Natural killer cell (primary cell): ENCODE measurements at regions of chrX and their contacts with region 1.

Region 1: DNA sequence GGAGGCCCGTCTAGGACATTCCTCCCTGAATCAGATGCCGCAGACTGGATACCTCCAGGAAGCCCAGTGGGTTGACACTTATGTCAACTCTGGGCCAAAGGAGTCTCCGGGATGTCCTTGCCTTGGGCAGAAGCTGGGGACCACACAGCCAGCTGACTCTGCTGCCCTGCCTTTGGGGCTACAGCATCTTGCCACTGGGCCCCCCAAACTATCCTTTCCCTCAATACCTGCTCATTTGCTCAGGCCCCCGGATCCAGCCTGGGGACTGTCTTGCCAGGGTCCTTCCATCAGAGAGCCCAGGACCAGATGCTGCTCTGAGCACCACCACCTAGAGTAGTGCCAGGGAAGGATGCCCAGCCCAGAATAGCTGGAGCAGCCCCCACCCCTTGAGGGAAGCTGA is 19.0 kb downstream of the RAB33A start:
- DNase-seq: no peak
- ATAC-seq: no peak
- H3K4me3 ChIP-seq: no peak overlapping the region
- H3K4me3 Mint-ChIP-seq: no peak overlapping the region
- H3K27ac ChIP-seq: no peak overlapping the region
- H3K27ac Mint-ChIP-seq: no peak overlapping the region
- H3K4me1 ChIP-seq: no peaks in the 10 kb centered on the region
- H3K4me1 Mint-ChIP-seq: no peaks in the 10 kb centered on the region
- H3K27me3 ChIP-seq: no peaks in the 10 kb centered on the region
- H3K27me3 Mint-ChIP-seq: peaks cover 0 to 5% of the 10 kb centered on the region in 2 donors
- CTCF ChIP-seq: no peak

Region 2: DNA sequence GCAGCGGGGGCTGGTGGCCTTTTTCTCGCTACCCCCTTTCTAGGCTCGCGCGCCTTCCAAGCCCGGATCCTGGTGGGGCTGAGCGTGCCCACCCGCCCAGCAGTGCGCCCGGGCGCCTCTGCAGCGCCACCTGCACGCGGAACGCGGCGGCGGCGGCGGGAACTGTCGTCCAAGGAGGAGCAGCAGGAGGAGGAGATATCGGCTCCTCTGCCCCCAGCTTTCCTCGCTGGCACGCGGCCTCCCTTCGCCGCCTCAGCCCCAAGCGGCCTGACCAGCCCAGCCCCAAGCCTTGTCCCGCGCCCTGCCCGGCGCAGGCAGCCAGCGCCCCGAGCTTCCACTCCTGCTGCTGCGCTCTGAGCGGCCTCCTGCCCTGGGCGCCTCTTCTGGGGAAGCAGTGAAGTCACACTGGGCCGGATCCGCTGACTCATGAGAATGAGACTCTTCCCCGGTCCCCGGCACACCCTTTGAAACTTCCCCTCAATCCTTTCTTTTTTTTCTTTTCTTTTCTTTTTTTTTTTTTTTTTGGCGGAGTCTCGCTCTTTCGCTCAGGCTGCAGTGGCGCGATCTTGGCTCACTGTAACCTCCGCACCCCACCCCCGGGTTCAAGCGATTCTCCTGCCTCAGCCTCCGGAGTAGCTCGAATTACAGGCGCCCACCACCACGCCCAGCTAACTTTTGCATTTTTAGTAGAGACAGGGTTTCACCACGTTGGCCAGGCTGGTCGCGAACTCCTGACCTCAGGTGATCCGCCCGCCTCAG is 69.9 kb before region 1 on chrX:
- intact Hi-C with region 1: loop called (anchors 5 kb)
- DNase-seq: peak; percentile 63 to 76
- ATAC-seq: peak; percentile 91 to 93 (median 93)
- H3K4me3 ChIP-seq: peak overlapping the region; percentile 38
- H3K4me3 Mint-ChIP-seq: peak overlapping the region; percentile 86
- H3K27ac ChIP-seq: no peak overlapping the region
- H3K27ac Mint-ChIP-seq: peak overlapping the region; percentile 36 to 74
- H3K4me1 ChIP-seq: peaks cover 29% of the 10 kb centered on the region
- H3K4me1 Mint-ChIP-seq: peaks cover 10 to 11% of the 10 kb centered on the region in 2 donors
- H3K27me3 ChIP-seq: no peaks in the 10 kb centered on the region
- H3K27me3 Mint-ChIP-seq: peaks cover 0 to 8% of the 10 kb centered on the region in 2 donors
- CTCF ChIP-seq: peak; percentile 76

Region 3: GRCh38 chrX:130165703-130166502 is 24.9 kb before region 1 on chrX and contains the start of gene AIFM1:
- intact Hi-C with region 1: no loop called
- DNase-seq: peak; percentile 82 to 94
- ATAC-seq: peak; percentile 86 to 94 (median 88)
- H3K4me3 ChIP-seq: peak within 1 kb of the TSS; percentile 71
- H3K4me3 Mint-ChIP-seq: peak within 1 kb of the TSS; percentile 88
- H3K27ac ChIP-seq: peak within 1 kb of the TSS; percentile 91
- H3K27ac Mint-ChIP-seq: peak within 1 kb of the TSS; percentile 90 to 91
- H3K4me1 ChIP-seq: peaks cover 11% of the 10 kb centered on the region
- H3K4me1 Mint-ChIP-seq: peaks cover 17 to 29% of the 10 kb centered on the region in 2 donors
- H3K27me3 ChIP-seq: no peaks in the 10 kb centered on the region
- H3K27me3 Mint-ChIP-seq: peaks cover 0 to 15% of the 10 kb centered on the region in 2 donors
- CTCF ChIP-seq: no peak
- total RNA-seq, gene AIFM1: 16.2 to 21.1 (median 17.0) TPM